ENCODE measurements at regions of chr3 and their contacts with region 1.

Region 1: GRCh38 chr3:132730891-132731580 is 8.8 kb upstream of the NPHP3 start:
- DNase-seq: peak; percentile 55
- ATAC-seq: peak; percentile 78
- H3K4me3 ChIP-seq: no peak overlapping the region
- H3K27ac ChIP-seq: no peak overlapping the region
- H3K4me1 ChIP-seq: no peaks in the 10 kb centered on the region
- H3K27me3 ChIP-seq: peaks cover 34% of the 10 kb centered on the region
- CTCF ChIP-seq: peak; percentile 55; the same call in 1 of the 2 replicates

Region 2: DNA sequence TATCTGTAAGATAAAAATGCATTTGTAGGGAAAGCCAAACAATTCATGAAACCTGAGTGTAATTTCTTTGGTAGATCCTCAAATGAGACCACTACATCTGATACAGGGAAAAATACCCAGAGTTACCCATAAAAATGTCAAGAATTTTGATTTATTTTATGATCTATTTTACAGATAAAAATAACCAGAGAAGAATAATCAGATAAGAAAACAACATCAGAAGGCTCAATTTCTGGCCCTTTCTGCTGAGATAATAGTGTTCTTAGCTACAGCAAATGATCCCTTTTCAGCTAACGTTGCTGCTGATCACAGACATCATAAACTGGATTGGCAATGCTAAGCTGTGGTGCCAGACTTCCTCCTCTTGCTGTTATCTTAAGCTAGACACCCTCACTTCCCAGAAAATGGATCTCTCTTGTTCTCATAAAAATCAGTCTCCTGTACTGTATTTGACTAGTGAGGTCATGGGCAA is 285.8 kb after region 1 on chr3:
- CTCF ChIA-PET with region 1: no interaction called
- POLR2A ChIA-PET with region 1: no interaction called
- intact Hi-C with region 1: no loop called
- DNase-seq: no peak
- ATAC-seq: no peak
- H3K4me3 ChIP-seq: no peak overlapping the region
- H3K27ac ChIP-seq: no peak overlapping the region
- H3K4me1 ChIP-seq: no peaks in the 10 kb centered on the region
- H3K27me3 ChIP-seq: peaks cover 11% of the 10 kb centered on the region; the same call in 1 of the 2 replicates
- CTCF ChIP-seq: no peak

Region 3: DNA sequence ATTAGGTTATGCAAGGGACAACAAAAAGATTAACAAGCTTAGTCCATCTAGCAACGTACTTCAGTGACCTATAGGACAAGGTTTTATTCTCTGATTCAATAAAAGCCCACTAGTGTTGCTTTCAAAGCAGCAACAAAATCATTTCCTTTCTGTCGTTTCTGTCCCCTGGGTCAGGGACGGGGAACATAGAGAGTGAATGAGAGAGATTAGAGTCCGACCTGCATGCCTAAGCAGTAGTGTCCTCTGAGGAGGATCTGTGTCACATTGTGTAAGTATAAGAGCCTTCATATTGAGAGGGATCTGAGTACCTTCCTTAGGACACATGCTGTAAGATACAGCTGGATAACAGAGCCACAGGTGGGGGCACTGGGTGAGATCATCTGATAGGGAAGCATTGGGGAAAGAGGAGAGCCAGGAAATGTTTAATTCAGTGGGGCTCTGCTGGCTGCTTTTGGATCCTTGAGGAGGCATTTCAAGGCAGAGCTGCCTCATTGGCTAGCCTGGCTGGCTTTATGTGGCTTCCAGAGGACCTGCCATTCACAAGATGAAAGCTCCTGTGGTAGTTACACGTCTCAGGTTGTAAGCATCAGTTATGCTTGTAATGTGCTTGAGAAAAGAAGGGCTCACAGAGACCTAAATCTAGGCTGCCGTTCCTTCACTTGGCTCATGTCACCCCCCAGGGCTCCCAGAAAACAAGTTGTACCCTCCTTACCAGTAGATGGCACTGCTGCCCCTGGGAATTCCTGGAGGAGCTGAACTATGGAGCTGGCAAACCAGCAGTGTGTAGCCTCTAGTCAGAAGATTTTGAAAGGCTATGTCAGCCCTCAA is 309.9 kb after region 1 on chr3:
- CTCF ChIA-PET with region 1: interaction called, 4 read pairs
- POLR2A ChIA-PET with region 1: no interaction called
- intact Hi-C with region 1: loop called (anchors 2 kb)
- DNase-seq: peak; percentile 77
- ATAC-seq: peak; percentile 88
- H3K4me3 ChIP-seq: no peak overlapping the region
- H3K27ac ChIP-seq: no peak overlapping the region
- H3K4me1 ChIP-seq: no peaks in the 10 kb centered on the region
- H3K27me3 ChIP-seq: peaks cover 42% of the 10 kb centered on the region
- CTCF ChIP-seq: peak; percentile 77

Region 4: GRCh38 chr3:133377396-133377795 is 646.4 kb after region 1 on chr3:
- CTCF ChIA-PET with region 1: no interaction called
- POLR2A ChIA-PET with region 1: no interaction called
- intact Hi-C with region 1: loop called (anchors 2 kb)
- DNase-seq: peak; percentile 50
- ATAC-seq: peak; percentile 60
- H3K4me3 ChIP-seq: no peak overlapping the region
- H3K27ac ChIP-seq: no peak overlapping the region
- H3K4me1 ChIP-seq: no peaks in the 10 kb centered on the region
- H3K27me3 ChIP-seq: peaks cover 28% of the 10 kb centered on the region
- CTCF ChIP-seq: peak; percentile 55

Region 5: GRCh38 chr3:133384331-133385027 is 653.4 kb after region 1 on chr3:
- CTCF ChIA-PET with region 1: no interaction called
- POLR2A ChIA-PET with region 1: no interaction called
- intact Hi-C with region 1: loop called (anchors 1 kb)
- DNase-seq: peak; percentile 69
- ATAC-seq: peak; percentile 84
- H3K4me3 ChIP-seq: no peak overlapping the region
- H3K27ac ChIP-seq: no peak overlapping the region
- H3K4me1 ChIP-seq: peaks cover 11% of the 10 kb centered on the region; the same call in 1 of the 2 replicates
- H3K27me3 ChIP-seq: peaks cover 23% of the 10 kb centered on the region
- CTCF ChIP-seq: peak; percentile 87

Region 6: DNA sequence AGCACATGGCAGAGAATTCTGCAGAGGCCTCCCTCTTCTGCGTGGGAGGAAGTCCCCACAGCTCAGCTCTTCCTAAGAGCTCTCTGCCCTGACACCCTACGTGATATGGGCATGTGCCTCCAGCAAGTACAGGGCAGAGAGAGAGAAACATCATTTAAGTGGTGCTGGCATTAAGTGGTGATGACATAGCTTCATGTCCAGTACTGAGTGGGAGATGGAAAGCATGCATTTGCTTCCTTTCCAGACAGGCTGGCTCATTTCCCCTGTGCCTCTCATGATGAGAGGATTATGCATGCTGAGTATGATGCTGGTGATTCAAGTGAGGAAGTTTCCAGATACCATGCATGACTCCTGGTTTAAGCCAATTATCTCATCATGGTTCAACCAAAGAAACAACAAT is 695.7 kb after region 1 on chr3:
- CTCF ChIA-PET with region 1: interaction called, 13 read pairs
- POLR2A ChIA-PET with region 1: no interaction called
- intact Hi-C with region 1: loop called (anchors 1 kb)
- DNase-seq: no peak
- ATAC-seq: no peak
- H3K4me3 ChIP-seq: no peak overlapping the region
- H3K27ac ChIP-seq: no peak overlapping the region
- H3K4me1 ChIP-seq: no peaks in the 10 kb centered on the region
- H3K27me3 ChIP-seq: no peaks in the 10 kb centered on the region
- CTCF ChIP-seq: no peak

Region 7: GRCh38 chr3:133578548-133579191 is 847.6 kb after region 1 on chr3:
- CTCF ChIA-PET with region 1: interaction called, 3 read pairs
- POLR2A ChIA-PET with region 1: no interaction called
- intact Hi-C with region 1: loop called (anchors 5 kb)
- DNase-seq: peak; percentile 63
- ATAC-seq: peak; percentile 53
- H3K4me3 ChIP-seq: peak overlapping the region; percentile 19; the same call in 1 of the 2 replicates
- H3K27ac ChIP-seq: no peak overlapping the region
- H3K4me1 ChIP-seq: peaks cover 19% of the 10 kb centered on the region
- H3K27me3 ChIP-seq: no peaks in the 10 kb centered on the region
- CTCF ChIP-seq: peak; percentile 70

Measured in PC-3 (cell line).